Mammary epithelial cell (primary cell): ENCODE measurements at regions of chr12 and their contacts with region 1.

Region 1: DNA sequence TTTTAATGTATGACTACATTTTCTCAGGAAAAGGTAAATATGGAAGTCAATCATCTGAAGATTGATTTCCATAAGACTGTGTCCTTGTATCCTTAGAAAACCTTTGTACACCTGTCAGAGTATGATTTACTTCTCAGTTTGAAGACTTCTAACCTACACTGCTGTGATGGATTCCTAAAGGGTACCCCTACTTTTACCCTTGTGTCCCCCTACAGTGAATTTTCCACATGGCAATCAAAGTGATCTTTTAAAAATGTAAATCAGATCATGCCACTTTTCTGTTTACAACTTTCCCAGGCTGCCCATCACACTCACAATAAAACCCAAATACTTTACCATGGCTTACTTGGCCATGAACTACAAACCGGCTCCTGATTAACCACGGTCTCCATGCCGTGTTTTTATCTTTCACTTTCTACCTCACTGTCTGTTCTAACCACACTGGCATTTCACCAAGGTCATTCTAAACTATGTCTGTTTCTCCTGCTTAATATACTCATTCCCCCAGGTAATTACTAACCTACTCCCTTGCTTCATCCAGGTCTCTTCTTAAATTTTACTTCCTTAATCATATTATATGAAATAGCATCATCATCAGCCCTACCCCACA is 8.1 kb downstream of the DNAI7 start:
- DNase-seq: peak; percentile 33
- H3K4me3 ChIP-seq: peak overlapping the region in 1 of 3 experiments; percentile 9
- H3K27ac ChIP-seq: peak overlapping the region; percentile 7
- H3K4me1 ChIP-seq: peaks cover 15% of the 10 kb centered on the region
- H3K27me3 ChIP-seq: no peaks in the 10 kb centered on the region
- CTCF ChIP-seq: no peak

Region 2: GRCh38 chr12:25208554-25208953 is 21.7 kb after region 1 on chr12:
- CTCF ChIA-PET with region 1: no interaction called
- dilution Hi-C with region 1: no loop called
- in situ Hi-C with region 1: no loop called
- intact Hi-C with region 1: loop called (anchors 1 kb)
- DNase-seq: no peak
- H3K4me3 ChIP-seq: no peak overlapping the region
- H3K27ac ChIP-seq: no peak overlapping the region
- H3K4me1 ChIP-seq: no peaks in the 10 kb centered on the region
- H3K27me3 ChIP-seq: no peaks in the 10 kb centered on the region
- CTCF ChIP-seq: no peak

Region 3: DNA sequence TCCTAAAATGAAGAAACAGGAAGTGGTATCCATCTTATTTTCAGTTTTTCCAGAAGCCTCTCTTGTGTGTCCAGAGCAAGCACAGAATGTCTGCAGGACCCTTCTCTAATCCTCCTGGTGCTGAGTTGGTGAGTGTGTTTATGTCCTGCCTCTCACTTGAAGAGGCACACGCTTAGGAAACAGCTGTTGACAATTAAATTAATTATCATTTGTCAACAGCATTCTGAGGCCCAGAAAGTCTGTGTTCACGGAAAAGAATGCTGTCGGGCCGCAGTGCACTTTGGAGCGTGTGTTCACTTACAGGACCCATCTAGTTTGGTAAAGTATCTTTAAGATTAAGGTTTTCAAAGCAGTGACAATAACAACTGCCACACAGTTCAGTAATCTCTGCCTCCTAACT is 295.7 kb after region 1 on chr12:
- CTCF ChIA-PET with region 1: no interaction called
- dilution Hi-C with region 1: no loop called
- in situ Hi-C with region 1: no loop called
- intact Hi-C with region 1: no loop called
- DNase-seq: no peak
- H3K4me3 ChIP-seq: no peak overlapping the region
- H3K27ac ChIP-seq: no peak overlapping the region
- H3K4me1 ChIP-seq: no peaks in the 10 kb centered on the region
- H3K27me3 ChIP-seq: no peaks in the 10 kb centered on the region
- CTCF ChIP-seq: no peak